OCI-LY7 (cell line): ENCODE measurements at regions of chr4 and their contacts with region 1.

Region 1: DNA sequence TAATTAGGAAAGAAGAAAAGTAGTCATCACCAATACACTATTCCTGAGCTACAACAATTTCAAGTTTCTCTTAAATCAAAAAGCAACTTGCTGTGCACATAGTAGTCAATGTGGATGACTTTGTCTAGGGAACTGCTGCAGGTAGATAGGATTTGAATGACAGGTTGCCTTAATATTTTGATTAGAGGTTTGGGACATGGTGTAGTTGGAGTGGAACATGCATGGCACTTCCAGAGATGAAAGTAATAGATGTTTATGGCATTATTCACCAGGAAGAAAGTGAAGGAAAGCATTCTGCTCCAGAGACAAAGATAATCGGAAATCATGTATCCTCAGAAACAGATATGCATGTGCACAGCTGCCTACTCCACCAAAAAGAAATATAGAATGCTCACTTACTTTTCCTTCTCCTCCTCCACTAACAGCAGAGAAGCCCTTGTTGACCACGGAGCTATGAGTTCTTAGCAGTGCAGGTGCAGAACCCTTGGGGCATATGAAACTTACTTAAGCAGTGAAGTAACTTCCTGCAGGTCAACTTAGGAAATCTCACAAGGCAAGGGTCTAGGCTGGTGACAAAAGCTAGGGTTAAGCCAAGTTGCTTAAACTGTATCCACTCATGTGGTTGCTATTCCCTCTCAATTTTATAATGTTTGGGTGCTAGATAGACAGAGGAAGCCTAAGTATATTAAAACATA is 390.8 kb downstream of the HNRNPD start:
- DNase-seq: peak; percentile 91
- H3K4me3 ChIP-seq: peak overlapping the region; percentile 21
- H3K27ac ChIP-seq: peak overlapping the region; percentile 55
- H3K4me1 ChIP-seq: peaks cover 77% of the 10 kb centered on the region
- CTCF ChIP-seq: no peak

Region 2: DNA sequence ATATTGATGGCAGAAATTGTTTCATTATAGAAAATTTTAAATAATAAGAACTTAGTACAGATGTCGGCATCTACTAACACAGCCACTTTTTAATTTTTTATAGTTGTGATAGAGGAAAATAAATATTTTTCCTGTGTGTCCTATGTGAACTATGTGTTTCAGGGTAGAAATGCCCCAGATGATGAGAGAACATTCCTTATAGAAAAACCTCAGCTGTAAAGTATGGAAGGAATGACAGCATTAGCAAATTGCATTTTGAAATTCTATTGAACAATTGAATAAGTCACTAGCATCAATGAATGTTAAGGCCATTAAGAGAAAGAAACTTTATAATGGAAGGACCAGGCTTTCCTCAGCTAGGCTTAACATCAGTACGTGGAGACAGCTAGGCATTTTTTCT is 1498.3 kb before region 1 on chr4:
- CTCF ChIA-PET with region 1: no interaction called
- POLR2A ChIA-PET with region 1: no interaction called
- intact Hi-C with region 1: no loop called
- DNase-seq: no peak
- H3K4me3 ChIP-seq: no peak overlapping the region
- H3K27ac ChIP-seq: no peak overlapping the region
- H3K4me1 ChIP-seq: peaks cover 42% of the 10 kb centered on the region
- CTCF ChIP-seq: no peak

Region 3: DNA sequence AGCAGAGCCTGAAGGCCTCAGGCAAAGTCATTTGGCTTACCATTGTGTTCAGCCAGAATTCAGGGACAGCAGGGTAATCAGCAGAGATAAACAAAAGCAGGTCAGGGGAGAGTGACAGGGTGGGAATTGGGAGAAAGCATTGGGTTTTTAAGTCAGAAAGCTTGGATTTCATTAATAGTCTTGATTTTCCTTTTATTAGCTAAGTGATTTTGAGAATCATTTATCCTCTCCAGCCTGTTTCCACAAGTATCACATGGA is 19.3 kb before region 1 on chr4:
- CTCF ChIA-PET with region 1: no interaction called
- POLR2A ChIA-PET with region 1: interaction called, 26 read pairs
- intact Hi-C with region 1: loop called (anchors 1 kb)
- DNase-seq: no peak
- H3K4me3 ChIP-seq: no peak overlapping the region
- H3K27ac ChIP-seq: no peak overlapping the region
- H3K4me1 ChIP-seq: peaks cover 39% of the 10 kb centered on the region
- CTCF ChIP-seq: no peak

Region 4: GRCh38 chr4:81970454-81970853 is 12.5 kb before region 1 on chr4:
- CTCF ChIA-PET with region 1: no interaction called
- POLR2A ChIA-PET with region 1: interaction called, 26 read pairs
- intact Hi-C with region 1: loop called (anchors 1 kb)
- DNase-seq: no peak
- H3K4me3 ChIP-seq: no peak overlapping the region
- H3K27ac ChIP-seq: no peak overlapping the region
- H3K4me1 ChIP-seq: peaks cover 74% of the 10 kb centered on the region
- CTCF ChIP-seq: no peak